ENCODE measurements at regions of chr11 and their contacts with region 1.

Region 1: DNA sequence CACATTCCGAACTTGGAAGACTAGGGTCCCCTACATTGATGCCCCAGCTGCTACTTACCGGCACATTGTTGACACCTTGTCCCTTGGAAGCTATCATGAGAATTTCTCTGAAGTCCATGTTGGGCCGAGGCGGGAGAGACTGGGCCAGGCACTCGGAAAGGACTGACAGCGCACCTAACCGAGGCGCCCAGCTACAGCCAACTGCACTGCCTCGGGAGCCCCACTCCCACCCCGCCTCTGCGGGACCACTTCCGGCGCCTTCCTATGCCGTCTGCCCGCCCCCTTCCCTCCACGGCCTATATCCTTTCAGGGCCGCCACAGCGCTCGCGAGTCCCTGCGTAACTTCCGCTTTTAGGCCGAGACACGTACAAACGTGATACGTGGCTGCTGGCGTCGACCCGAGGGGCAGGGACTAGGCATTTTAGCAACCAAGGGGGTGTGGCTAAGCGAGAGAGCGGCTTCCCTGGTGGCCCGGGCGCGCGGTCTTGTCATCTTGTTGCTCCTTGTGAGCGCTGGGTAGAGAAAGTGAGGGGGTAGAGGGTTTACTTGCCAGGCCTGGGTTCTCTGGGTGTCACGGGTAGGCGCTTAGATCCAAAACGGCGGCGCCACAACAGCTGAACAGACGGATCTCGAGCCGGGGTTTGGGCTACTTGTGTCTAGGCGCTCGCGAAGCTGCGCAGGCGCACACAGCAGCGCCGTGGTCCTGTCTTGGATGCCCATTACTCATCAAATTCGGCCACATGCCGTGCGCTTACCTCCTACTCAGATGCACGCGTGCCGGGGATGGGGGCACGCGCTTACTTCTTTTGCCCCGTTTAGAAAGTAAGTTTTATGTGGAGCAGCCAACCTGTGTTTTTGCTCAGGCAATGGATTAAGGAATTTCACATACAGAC is at the start of gene SPTY2D1:
- DNase-seq: peak; percentile 97 to 100 (median 100)

Region 2: DNA sequence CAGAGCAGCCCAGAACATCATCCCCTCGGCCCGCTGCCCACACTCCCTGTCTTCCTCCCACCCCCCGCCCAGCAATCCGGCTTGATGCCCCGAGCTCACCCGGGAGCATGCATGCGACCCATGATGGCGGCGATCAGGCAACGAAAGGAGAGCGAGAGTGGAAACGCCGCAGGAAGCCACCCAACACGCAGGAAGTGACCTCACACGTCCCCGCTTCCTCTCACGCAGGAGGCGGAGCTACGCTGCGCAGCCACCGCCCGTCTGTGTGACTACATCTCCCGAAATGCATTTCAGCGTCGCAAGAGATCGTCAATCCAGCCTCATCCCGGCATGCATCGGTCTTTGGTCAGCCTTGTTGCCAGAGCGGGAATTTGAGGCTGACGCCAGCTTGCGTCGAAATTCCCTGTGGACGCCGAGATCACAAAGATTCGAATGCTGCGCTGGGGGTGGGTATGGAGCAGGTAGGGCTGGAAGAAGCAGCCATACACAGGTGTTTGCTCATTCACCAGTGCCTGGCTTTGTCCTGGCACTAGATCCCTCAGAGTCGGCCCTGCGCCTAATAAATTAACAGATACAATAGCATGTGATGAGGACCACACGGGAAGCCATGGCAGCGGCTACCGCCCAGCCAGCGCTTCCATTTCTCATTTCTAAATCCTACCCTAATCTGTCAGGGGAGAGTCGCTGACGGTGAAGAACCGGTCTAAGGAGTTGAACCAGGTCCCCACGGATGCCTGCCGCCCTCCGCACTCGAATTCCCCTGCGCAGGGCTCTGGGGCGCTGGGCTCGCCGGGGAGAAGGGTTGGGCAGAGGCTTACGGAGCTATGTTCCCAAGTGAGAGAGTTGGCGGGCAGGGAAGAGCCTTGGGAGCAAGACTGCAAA is 1556.6 kb before region 1 on chr11 and contains the start of gene RPS13:
- intact Hi-C with region 1: loop called (anchors 5 kb)
- DNase-seq: peak; percentile 97 to 100 (median 98)

Region 3: GRCh38 chr11:18321980-18322711 is 312.2 kb before region 1 on chr11 and contains the starts of genes GTF2H1 and HPS5:
- intact Hi-C with region 1: loop called (anchors 2 kb)
- DNase-seq: peak; percentile 92 to 99 (median 96)

Region 4: DNA sequence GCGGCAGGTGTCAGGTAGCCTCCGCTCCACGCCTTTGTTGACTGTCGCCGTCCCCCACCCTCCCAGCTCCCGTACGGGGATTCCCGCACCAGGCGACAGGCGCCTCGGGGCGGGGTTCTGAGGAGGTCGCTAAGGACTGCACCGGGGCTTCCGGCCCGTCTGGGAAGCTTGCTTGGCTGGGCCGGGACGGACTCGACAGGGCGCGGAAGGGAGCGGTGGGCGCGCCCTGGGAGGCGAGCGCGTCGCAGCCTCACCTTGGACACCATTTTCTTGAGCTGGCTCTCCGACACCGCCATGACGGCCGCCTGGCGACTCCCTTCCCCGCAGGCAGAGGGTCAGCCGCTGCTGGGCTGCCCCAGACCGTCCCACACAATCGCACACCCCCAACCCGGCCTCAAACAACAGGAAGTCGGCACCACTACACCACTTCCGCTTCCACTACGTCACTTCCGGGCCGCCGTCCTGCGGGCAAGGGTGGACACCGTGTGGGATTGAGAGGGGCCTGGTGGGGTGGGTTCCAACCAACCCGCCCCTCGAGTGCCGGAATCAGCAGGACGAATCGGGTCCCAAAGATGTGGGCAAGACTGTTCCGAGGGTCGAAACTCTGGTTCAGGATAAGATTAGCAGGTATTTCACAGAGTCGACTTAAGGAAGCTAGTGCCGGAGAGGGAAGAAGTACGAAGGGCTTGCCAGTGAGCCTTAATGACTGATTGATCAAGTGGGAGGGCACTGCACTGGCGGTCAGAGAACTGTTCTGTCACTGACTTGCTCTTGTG is 107.7 kb before region 1 on chr11 and contains the start of gene TSG101:
- intact Hi-C with region 1: loop called (anchors 5 kb)
- DNase-seq: peak; percentile 93 to 99 (median 96)

Region 5: GRCh38 chr11:18588297-18589252 is 45.8 kb before region 1 on chr11 and contains the start of gene UEVLD:
- intact Hi-C with region 1: loop called (anchors 2 kb)
- DNase-seq: peak; percentile 80 to 98 (median 86)

Region 6: GRCh38 chr11:18698341-18699268 is 64.2 kb after region 1 on chr11 and contains the start of gene TMEM86A:
- intact Hi-C with region 1: loop called (anchors 5 kb)
- DNase-seq: peak; percentile 90 to 99 (median 94)

Region 7: GRCh38 chr11:18721561-18722292 is 87.3 kb after region 1 on chr11:
- intact Hi-C with region 1: loop called (anchors 5 kb)
- DNase-seq: peak in 4 of 10 donors; percentile 27 to 87 (median 62)

Region 8: DNA sequence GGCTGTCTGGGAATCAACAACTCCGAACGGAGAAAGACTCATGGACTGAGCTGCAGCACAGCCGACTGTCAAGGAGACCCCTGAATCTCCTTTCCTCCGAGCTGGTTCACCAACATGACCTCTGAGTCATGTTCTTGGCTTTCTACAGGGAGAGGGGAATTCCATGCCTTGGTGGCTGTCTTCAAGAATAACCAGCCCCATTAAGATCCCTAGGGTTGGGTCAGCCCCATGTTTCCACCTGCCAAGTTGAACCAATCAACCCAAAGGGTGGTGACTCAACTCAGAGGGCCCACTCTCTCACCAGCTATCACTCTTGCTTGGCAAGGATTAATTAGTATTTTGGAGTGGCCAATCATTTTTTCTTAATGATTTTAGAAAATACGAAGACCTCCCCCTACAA is 119.9 kb after region 1 on chr11:
- intact Hi-C with region 1: no loop called
- DNase-seq: no peak

Measured in posterior cingulate gyrus (tissue), 11 donors.